ENCODE measurements at regions of chr19 and their contacts with region 1.

Region 1: GRCh38 chr19:9140159-9140874 is at the start of gene ZNF317:
- DNase-seq: peak; percentile 94 to 96
- ATAC-seq: peak; percentile 98
- H3K4me3 ChIP-seq: peak within 1 kb of the TSS; percentile 59 to 79
- H3K27ac ChIP-seq: peak within 1 kb of the TSS; percentile 6 to 15
- H3K4me1 ChIP-seq: peaks cover 0 to 2% of the 10 kb centered on the region in 2 donors
- H3K27me3 ChIP-seq: no peaks in the 10 kb centered on the region
- total RNA-seq, gene ZNF317: 22.6 to 24.6 TPM

Region 2: DNA sequence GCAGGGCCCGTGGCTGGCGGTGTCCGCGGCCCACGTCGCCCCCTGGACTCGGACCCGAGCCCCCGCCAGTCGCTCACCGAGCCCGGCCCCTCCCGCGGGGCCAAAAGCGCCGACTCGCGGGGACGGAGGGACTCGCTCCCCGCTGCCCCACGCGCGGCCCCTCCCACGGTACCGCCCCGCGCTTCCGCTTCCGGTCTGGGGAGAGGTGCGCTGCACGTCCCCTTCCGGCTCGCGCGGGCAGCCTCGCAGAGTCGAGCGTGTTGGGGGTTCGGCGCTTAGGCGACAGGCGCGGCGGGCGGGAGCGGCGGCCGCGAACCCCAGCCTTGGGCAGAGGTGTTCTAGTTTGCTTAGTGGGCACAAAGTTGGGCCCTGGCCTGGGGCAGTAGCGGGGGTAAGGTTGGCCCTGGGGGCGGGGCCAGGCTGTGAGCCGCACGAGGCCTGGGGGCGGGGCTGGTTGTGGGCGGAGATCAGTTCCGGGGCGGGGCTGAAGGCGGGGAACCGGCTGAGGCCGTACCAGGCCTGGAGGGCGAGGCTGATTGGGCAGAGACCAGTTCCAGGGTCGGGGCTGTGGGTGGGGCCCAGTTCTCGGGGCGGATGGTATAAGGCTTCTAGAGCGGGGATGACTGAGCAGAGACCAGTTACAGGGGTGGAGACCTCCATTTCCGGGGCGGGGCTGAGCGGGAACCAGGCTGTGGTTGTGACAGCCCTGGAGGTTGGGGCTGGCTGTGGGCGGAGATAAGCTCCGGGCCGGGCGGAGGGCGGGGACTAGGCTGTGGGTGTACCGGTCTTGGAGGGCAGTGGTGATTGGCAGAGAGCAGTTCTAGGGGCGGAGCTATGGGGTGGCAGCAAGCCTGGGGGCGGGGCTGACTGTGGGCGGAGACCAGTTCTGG is 307.9 kb before region 1 on chr19 and contains the starts of genes MBD3L1 and ZNF558:
- intact Hi-C with region 1: loop called in 1 of 2 experiments (anchors 5 kb)
- DNase-seq: peak; percentile 100
- ATAC-seq: peak; percentile 98
- H3K4me3 ChIP-seq: peak within 1 kb of the TSS; percentile 39 to 62
- H3K27ac ChIP-seq: peak within 1 kb of the TSS in 1 of 2 donors; percentile 79
- H3K4me1 ChIP-seq: no peaks in the 10 kb centered on the region
- H3K27me3 ChIP-seq: no peaks in the 10 kb centered on the region
- total RNA-seq, gene MBD3L1: not detected
- total RNA-seq, gene ZNF558: 24.1 to 32.7 TPM

Region 3: GRCh38 chr19:8965887-8966286 is 174.4 kb before region 1 on chr19:
- intact Hi-C with region 1: no loop called
- DNase-seq: no peak
- ATAC-seq: no peak
- H3K4me3 ChIP-seq: no peak overlapping the region
- H3K27ac ChIP-seq: no peak overlapping the region
- H3K4me1 ChIP-seq: no peaks in the 10 kb centered on the region
- H3K27me3 ChIP-seq: no peaks in the 10 kb centered on the region